SK-N-SH (cell line): ENCODE measurements at regions of chr7 and their contacts with region 1.

Region 1: GRCh38 chr7:101815835-101816493 is 1.5 kb upstream of the CUX1 start:
- DNase-seq: peak; percentile 97
- H3K4me3 ChIP-seq: peak overlapping the region; percentile 53 to 97
- H3K27ac ChIP-seq: peak overlapping the region in 1 of 2 experiments; percentile 94; a peak in 2 of 4 replicates
- H3K4me1 ChIP-seq: peaks cover 18 to 42% of the 10 kb centered on the region in 2 experiments; a peak in 3 of 4 replicates
- H3K27me3 ChIP-seq: no peaks in the 10 kb centered on the region
- CTCF ChIP-seq: no peak
- EP300 ChIP-seq: peak in 1 of 2 experiments; percentile 60; a peak in 1 of 4 replicates
- RAD21 ChIP-seq: peak; percentile 25; the same call in 1 of the 2 replicates

Region 2: GRCh38 chr7:101537205-101537604 is 278.8 kb before region 1 on chr7:
- CTCF ChIA-PET with region 1: interaction called, 15 read pairs
- POLR2A ChIA-PET with region 1: no interaction called
- DNase-seq: peak; percentile 83
- H3K4me3 ChIP-seq: no peak overlapping the region
- H3K27ac ChIP-seq: no peak overlapping the region; a peak in 1 of 4 replicates
- H3K4me1 ChIP-seq: peaks cover 0 to 18% of the 10 kb centered on the region in 2 experiments; a peak in 1 of 4 replicates
- H3K27me3 ChIP-seq: no peaks in the 10 kb centered on the region
- CTCF ChIP-seq: no peak
- EP300 ChIP-seq: no peak
- RAD21 ChIP-seq: no peak

Region 3: DNA sequence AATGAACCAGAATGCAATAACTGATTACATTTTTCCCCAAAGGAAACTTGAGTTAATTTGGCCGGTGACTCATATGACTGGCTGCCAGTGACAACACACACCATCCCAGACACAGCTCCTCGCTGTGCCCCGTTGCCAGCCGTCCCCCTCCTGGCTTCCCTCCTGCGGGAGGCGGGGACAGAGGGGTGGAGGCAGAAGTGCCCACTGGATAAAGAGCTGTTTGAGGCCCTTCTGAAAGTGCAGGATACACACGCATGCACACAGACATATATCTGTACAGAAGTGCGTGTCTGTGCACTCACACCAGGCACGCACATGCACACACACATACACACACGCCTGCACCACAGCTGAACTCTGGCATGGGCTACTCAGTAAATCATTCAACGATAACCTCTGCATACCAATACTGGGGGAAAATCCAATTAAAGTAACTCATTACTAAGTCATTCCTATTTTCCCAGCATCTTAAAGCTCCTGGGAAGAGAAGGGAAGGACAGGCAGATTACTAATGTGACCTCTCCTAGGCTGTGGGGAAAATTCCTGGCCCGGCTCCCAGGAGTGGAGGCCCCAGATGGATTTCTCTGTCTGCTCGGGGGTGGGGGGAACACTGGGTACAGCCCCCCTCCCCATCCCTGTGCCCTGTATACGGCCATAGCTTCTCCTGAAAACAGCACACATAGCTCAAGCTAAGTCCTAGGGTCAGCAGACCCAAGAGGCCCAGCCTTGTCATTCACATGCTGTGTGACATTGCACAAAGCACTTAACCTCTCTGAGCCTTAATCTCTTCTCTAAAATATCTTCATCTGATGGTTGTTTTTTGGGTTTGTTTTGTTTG is 134.6 kb before region 1 on chr7:
- CTCF ChIA-PET with region 1: interaction called, 10 read pairs
- POLR2A ChIA-PET with region 1: no interaction called
- DNase-seq: peak; percentile 94
- H3K4me3 ChIP-seq: peak overlapping the region in 1 of 2 experiments; percentile 35; a peak in 1 of 4 replicates
- H3K27ac ChIP-seq: peak overlapping the region; percentile 34 to 88
- H3K4me1 ChIP-seq: peaks cover 15% of the 10 kb centered on the region in 2 experiments; a peak in 3 of 4 replicates
- H3K27me3 ChIP-seq: no peaks in the 10 kb centered on the region
- CTCF ChIP-seq: no peak
- EP300 ChIP-seq: peak; percentile 53 to 62; a peak in 3 of 4 replicates
- RAD21 ChIP-seq: peak; percentile 32; the same call in 1 of the 2 replicates

Region 4: GRCh38 chr7:101743241-101743994 is 72.5 kb before region 1 on chr7:
- CTCF ChIA-PET with region 1: interaction called, 56 read pairs
- POLR2A ChIA-PET with region 1: no interaction called
- DNase-seq: peak; percentile 94
- H3K4me3 ChIP-seq: peak overlapping the region; percentile 54 to 90
- H3K27ac ChIP-seq: no peak overlapping the region
- H3K4me1 ChIP-seq: no peaks in the 10 kb centered on the region; a peak in 1 of 4 replicates
- H3K27me3 ChIP-seq: no peaks in the 10 kb centered on the region; the same call in 1 of the 2 replicates
- CTCF ChIP-seq: peak; percentile 86
- EP300 ChIP-seq: no peak; a peak in 2 of 4 replicates
- RAD21 ChIP-seq: peak; percentile 37

Region 5: GRCh38 chr7:102425639-102426267 is 609.8 kb after region 1 on chr7:
- CTCF ChIA-PET with region 1: no interaction called
- POLR2A ChIA-PET with region 1: no interaction called
- DNase-seq: no peak
- H3K4me3 ChIP-seq: no peak overlapping the region
- H3K27ac ChIP-seq: no peak overlapping the region
- H3K4me1 ChIP-seq: no peaks in the 10 kb centered on the region
- H3K27me3 ChIP-seq: no peaks in the 10 kb centered on the region
- CTCF ChIP-seq: no peak
- EP300 ChIP-seq: no peak
- RAD21 ChIP-seq: no peak